Activated CD8-positive, alpha-beta memory T cell treated with anti-CD3 and anti-CD28 coated beads, Interleukin-2, amount 10 ng/mL, durations not matched to agents 7 days and 5 days (primary cell): ENCODE measurements at regions of chr1 and their contacts with region 1.

Region 1: GRCh38 chr1:7942214-7942921 is 1.7 kb upstream of the TNFRSF9 start:
- DNase-seq: peak; percentile 58
- ATAC-seq: peak; percentile 50
- H3K4me3 Mint-ChIP-seq: peak overlapping the region; percentile 71
- H3K27ac Mint-ChIP-seq: peak overlapping the region; percentile 63
- H3K4me1 Mint-ChIP-seq: peaks cover 52% of the 10 kb centered on the region
- H3K27me3 Mint-ChIP-seq: no peaks in the 10 kb centered on the region

Region 2: GRCh38 chr1:7827126-7827955 is 115.0 kb before region 1 on chr1:
- CTCF ChIA-PET with region 1: no interaction called
- DNase-seq: peak; percentile 57
- ATAC-seq: peak; percentile 80
- H3K4me3 Mint-ChIP-seq: peak overlapping the region; percentile 87
- H3K27ac Mint-ChIP-seq: peak overlapping the region; percentile 91
- H3K4me1 Mint-ChIP-seq: peaks cover 16% of the 10 kb centered on the region
- H3K27me3 Mint-ChIP-seq: no peaks in the 10 kb centered on the region

Region 3: GRCh38 chr1:7930645-7931445 is 11.5 kb before region 1 on chr1:
- CTCF ChIA-PET with region 1: interaction called, 11 read pairs
- DNase-seq: no peak
- ATAC-seq: peak; percentile 66
- H3K4me3 Mint-ChIP-seq: peak overlapping the region; percentile 70
- H3K27ac Mint-ChIP-seq: peak overlapping the region; percentile 97
- H3K4me1 Mint-ChIP-seq: peaks cover 32% of the 10 kb centered on the region
- H3K27me3 Mint-ChIP-seq: no peaks in the 10 kb centered on the region

Region 4: GRCh38 chr1:7961216-7962015 is 19.0 kb after region 1 on chr1 and contains the start of gene PARK7:
- CTCF ChIA-PET with region 1: interaction called, 10 read pairs
- DNase-seq: peak; percentile 100
- ATAC-seq: peak; percentile 94
- H3K4me3 Mint-ChIP-seq: peak within 1 kb of the TSS; percentile 95
- H3K27ac Mint-ChIP-seq: peak within 1 kb of the TSS; percentile 98
- H3K4me1 Mint-ChIP-seq: peaks cover 64% of the 10 kb centered on the region
- H3K27me3 Mint-ChIP-seq: no peaks in the 10 kb centered on the region
- total RNA-seq, gene PARK7: 310 to 434 TPM